Vagina (tissue), 2 donors: ENCODE measurements at regions of chr10 and their contacts with region 1.

Region 1: DNA sequence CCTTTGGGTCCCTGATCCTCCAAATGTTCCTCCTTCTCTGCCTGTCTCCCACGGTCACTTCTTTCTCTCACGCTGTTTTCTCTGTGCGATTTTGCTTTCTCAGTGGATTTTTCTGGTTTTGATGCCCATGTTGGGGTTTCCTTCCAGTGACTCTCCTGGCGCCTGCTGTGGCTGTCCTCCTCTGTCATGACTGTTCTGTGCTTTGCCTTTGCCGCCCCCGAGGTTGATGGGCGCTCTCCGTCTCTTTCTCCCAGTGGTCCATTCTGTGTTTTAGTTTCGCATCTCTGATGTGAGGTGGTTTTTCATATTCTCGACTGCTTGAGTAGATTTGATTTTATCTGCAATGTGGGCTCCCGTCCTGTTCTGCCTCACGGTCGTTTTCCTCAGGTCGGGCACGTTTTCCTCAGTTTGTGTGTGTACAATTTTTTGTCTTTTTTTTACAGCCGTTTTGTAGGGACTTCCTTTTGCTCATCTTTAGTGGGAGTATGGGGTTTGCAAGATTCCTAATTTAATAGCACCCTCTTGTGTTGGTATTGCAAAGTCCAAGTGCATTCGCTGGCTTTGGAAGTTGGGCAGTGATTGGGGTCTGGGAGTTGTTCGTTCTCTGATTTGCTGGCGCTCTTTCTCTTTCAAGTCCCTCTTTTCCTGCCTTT is 100.0 kb downstream of the INPP5A start:
- DNase-seq: no peak
- H3K4me3 ChIP-seq: no peak overlapping the region
- H3K27ac ChIP-seq: no peak overlapping the region
- H3K4me1 ChIP-seq: peaks cover 38% of the 10 kb centered on the region
- H3K27me3 ChIP-seq: no peaks in the 10 kb centered on the region
- CTCF ChIP-seq: peak; percentile 63 to 83 (median 71)
- POLR2A ChIP-seq: no peak

Region 2: GRCh38 chr10:132396495-132397035 is 241.0 kb before region 1 on chr10:
- intact Hi-C with region 1: loop called (anchors 10 kb)
- DNase-seq: no peak
- H3K4me3 ChIP-seq: peak overlapping the region; percentile 77 to 80
- H3K27ac ChIP-seq: peak overlapping the region; percentile 96
- H3K4me1 ChIP-seq: peaks cover 59% of the 10 kb centered on the region
- H3K27me3 ChIP-seq: no peaks in the 10 kb centered on the region
- CTCF ChIP-seq: no peak
- POLR2A ChIP-seq: no peak

Region 3: GRCh38 chr10:132458593-132459300 is 178.9 kb before region 1 on chr10:
- intact Hi-C with region 1: loop called (anchors 2 kb)
- DNase-seq: no peak
- H3K4me3 ChIP-seq: no peak overlapping the region
- H3K27ac ChIP-seq: peak overlapping the region; percentile 2
- H3K4me1 ChIP-seq: peaks cover 26% of the 10 kb centered on the region
- H3K27me3 ChIP-seq: no peaks in the 10 kb centered on the region
- CTCF ChIP-seq: peak; percentile 89 to 98 (median 95)
- POLR2A ChIP-seq: no peak

Region 4: DNA sequence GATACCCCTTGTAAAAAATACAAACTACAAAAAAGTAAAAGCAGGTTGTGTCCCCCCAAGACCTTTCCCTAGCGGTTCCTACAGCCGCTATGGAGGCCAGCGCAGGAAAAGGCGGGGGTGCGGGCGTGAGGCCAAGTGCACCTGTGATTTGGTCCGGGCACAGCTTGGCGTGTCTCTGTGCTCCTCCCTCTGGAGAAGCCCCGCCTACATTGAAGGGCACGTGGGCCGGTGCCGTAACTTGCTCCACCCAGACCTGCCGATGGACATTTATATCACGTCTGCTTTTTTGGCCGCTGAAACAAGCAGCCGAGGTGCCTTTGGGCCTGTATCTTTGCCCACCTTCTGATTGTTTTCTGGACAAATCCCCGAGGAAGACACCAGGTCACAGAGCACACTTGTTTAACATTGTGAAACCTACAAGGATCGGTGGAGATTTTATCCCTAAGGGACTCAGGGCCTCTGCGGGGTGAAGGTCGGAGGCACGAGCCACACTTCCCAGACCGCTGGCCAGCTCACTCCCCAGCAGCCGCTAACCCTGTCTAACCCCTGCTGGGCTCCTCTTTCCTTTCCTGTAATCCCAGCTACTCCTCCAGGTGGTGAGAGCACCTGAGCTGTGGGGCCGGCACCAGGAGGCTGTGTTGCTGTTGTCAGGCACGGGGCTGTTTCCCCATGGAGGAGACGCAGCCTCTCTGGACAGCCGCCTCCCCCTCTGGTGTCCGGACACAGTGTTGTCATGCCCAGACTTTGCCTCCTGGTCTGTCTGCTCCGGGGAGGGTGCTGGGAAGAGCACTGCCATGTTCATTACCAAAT is 118.8 kb before region 1 on chr10:
- intact Hi-C with region 1: no loop called
- DNase-seq: no peak
- H3K4me3 ChIP-seq: no peak overlapping the region
- H3K27ac ChIP-seq: peak overlapping the region; percentile 93
- H3K4me1 ChIP-seq: peaks cover 64% of the 10 kb centered on the region
- H3K27me3 ChIP-seq: no peaks in the 10 kb centered on the region
- CTCF ChIP-seq: no peak
- POLR2A ChIP-seq: no peak

Region 5: DNA sequence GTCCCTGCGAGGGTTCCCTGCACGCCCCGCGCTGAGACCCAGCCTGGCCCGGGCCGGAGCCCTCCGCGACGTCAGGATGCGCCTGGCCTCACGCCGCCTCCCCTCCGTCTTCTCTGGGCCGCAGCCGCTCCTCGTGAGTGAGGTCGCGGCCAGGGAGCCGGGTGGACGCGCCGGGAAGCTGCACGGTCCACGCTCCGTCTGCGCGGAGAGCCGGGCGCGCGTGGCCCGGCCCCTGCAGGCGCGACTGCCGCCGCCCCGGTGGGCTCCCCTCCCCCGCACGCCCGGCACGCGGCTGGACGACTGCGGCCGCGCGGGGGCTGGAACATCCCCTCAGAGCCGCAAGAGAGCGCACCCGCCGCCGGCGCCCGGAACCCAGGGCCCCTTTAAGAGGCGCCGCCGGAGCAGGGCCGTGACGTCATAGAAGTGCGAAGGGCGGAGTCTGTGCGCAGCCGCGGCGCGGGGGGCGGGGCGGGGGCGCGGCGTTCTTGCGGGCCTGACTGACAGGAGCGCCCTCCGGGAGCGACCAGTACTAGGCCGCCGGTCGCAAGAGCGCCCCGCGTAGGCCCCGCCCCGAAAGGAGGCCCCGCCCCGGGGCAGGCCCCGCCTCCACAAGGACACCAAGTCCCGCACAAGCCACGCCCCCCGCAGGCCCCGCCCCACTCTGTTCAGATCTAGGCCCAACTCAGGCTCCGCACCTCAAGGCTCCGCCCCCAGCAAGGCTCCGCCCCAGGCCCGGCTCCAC is 100.5 kb before region 1 on chr10:
- intact Hi-C with region 1: loop called (anchors 5 kb)
- DNase-seq: peak in 1 of 2 donors; percentile 100
- H3K4me3 ChIP-seq: peak overlapping the region; percentile 64 to 93
- H3K27ac ChIP-seq: peak overlapping the region; percentile 91
- H3K4me1 ChIP-seq: peaks cover 64% of the 10 kb centered on the region
- H3K27me3 ChIP-seq: no peaks in the 10 kb centered on the region
- CTCF ChIP-seq: peak in 1 of 3 experiments; percentile 3
- POLR2A ChIP-seq: peak in 1 of 2 donors; percentile 91

Region 6: GRCh38 chr10:132575356-132576201 is 62.0 kb before region 1 on chr10:
- intact Hi-C with region 1: loop called (anchors 5 kb)
- DNase-seq: no peak
- H3K4me3 ChIP-seq: no peak overlapping the region
- H3K27ac ChIP-seq: peak overlapping the region; percentile 50
- H3K4me1 ChIP-seq: peaks cover 80% of the 10 kb centered on the region
- H3K27me3 ChIP-seq: no peaks in the 10 kb centered on the region
- CTCF ChIP-seq: no peak
- POLR2A ChIP-seq: no peak

Region 7: GRCh38 chr10:132762267-132762666 is 124.7 kb after region 1 on chr10:
- intact Hi-C with region 1: no loop called
- DNase-seq: no peak
- H3K4me3 ChIP-seq: no peak overlapping the region
- H3K27ac ChIP-seq: no peak overlapping the region
- H3K4me1 ChIP-seq: no peaks in the 10 kb centered on the region
- H3K27me3 ChIP-seq: no peaks in the 10 kb centered on the region
- CTCF ChIP-seq: no peak
- POLR2A ChIP-seq: no peak

Region 8: GRCh38 chr10:132826524-132827422 is 189.2 kb after region 1 on chr10:
- intact Hi-C with region 1: no loop called
- DNase-seq: no peak
- H3K4me3 ChIP-seq: no peak overlapping the region
- H3K27ac ChIP-seq: no peak overlapping the region
- H3K4me1 ChIP-seq: no peaks in the 10 kb centered on the region
- H3K27me3 ChIP-seq: no peaks in the 10 kb centered on the region
- CTCF ChIP-seq: no peak
- POLR2A ChIP-seq: no peak